RWPE1 (cell line): ENCODE measurements at regions of chr5 and their contacts with region 1.

Region 1: DNA sequence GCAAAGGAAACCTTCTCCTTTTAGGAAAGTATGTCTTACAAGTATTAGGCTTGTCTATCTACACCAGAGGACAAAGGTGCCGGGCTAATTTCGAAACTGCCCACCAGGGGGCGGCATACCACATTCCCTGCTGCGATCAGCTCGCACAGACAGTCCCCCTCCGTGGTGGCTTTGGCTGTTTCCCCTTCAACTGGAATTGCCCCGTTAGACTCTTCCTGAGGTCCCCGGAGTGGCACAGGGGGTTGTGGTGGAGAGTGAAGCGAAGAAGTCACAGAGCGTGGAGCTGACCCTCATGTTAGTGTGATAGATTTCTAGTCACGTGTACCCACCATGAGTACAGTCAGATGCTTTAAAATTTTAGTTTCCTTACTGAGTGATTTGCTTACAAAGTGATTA is 17.5 kb downstream of the PTTG1 start:
- DNase-seq: peak; percentile 91
- H3K27ac ChIP-seq: no peak overlapping the region
- CTCF ChIP-seq: peak; percentile 92

Region 2: GRCh38 chr5:160418561-160419457 is 20.4 kb before region 1 on chr5 and contains the start of gene SLU7:
- CTCF ChIA-PET with region 1: interaction called, 15 read pairs
- POLR2A ChIA-PET with region 1: interaction called, 8 read pairs
- DNase-seq: peak; percentile 99
- H3K27ac ChIP-seq: peak within 1 kb of the TSS; percentile 76
- CTCF ChIP-seq: no peak

Region 3: DNA sequence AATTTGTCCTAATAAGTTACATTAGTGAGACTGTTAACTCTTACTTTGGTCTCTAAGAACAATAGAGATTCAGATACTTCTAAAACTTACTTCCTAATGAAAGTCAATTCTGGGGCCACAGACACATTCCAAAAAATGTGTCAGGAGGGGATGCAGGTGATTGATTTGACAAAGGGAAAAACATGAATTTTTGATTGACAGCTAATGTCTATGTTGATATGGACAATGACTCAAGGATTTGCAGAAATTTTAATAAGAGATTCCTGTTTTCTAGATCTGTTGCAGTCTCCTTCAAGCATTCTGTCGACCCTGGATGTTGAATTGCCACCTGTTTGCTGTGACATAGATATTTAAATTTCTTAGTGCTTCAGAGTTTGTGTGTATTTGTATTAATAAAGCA is 10.9 kb before region 1 on chr5:
- CTCF ChIA-PET with region 1: interaction called, 15 read pairs
- POLR2A ChIA-PET with region 1: no interaction called
- DNase-seq: no peak
- H3K27ac ChIP-seq: no peak overlapping the region
- CTCF ChIP-seq: no peak

Region 4: DNA sequence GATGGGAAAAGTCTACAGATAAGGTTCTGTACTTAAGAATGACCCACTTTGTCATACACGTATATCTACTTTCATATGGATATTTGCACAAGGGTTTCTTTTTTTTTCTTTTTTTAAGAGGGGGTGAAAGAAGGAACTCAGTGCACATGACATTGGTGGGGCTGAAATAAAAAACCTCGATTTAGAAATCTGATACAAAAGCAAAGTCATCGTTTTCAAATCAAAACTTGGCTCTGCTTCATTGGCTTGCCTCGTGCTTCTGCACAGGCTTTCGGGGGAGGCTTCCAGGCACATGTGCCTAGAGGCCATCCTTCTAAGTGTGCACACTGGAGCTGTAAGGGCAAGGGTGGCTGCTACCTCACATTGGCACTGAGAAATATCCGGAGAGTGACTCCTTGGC is 13.6 kb after region 1 on chr5:
- CTCF ChIA-PET with region 1: interaction called, 12 read pairs
- POLR2A ChIA-PET with region 1: no interaction called
- DNase-seq: no peak
- H3K27ac ChIP-seq: no peak overlapping the region
- CTCF ChIP-seq: no peak

Region 5: DNA sequence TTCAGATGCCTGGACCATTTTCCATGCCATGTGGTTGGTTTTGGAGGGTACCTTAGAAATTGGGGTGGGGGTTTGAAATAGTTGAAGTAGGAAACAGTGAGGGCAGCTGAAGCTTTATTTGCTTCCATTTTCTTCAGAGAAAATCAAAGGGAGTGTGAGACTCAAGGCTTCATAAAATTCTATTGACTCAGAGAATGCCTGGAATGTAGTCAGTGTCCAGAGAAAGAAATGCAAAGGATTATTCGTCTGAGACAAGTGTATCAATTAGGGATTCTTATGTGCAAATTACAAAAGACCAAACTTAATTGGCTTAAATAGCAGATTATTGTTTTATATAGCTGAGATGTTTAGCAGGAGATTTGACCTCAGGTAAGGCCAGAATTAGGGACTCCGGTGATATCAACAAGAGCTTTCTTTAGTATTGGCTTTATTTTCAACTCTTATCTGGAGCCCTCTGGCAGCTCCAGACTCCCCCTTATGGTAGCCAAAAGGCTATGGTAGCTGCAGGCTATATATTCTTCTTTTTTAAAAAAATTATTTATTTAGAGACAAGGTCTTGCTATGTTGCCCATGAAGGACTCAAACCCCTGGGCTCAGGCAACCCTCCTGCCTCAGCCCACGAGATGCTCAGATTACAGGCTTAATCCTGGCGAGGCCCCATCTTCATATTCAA is 21.3 kb after region 1 on chr5:
- CTCF ChIA-PET with region 1: interaction called, 13 read pairs
- POLR2A ChIA-PET with region 1: no interaction called
- DNase-seq: no peak
- H3K27ac ChIP-seq: no peak overlapping the region
- CTCF ChIP-seq: no peak

Region 6: GRCh38 chr5:160479926-160480325 is 40.7 kb after region 1 on chr5:
- CTCF ChIA-PET with region 1: no interaction called
- POLR2A ChIA-PET with region 1: no interaction called
- DNase-seq: no peak
- H3K27ac ChIP-seq: no peak overlapping the region
- CTCF ChIP-seq: no peak